ENCODE measurements at regions of chr4 and their contacts with region 1.

Region 1: DNA sequence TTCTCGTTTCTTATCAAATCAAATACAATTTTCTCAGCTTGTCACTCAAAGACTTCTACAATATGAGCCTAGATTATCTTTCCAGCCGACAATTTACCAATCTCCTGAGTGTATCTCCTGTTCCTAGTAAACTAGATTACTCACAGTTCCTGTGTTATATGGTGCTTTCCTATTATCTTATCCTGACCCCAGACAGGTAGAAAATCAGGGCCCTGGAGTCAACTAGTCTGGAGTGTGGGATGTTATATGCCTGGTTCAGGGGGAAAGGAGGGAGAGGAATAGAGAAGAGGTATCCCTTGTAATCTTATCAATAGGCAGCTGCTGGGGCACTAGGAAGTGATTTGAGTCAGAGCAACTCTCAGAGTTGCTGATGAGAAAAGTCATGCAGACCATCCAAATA is 127.1 kb downstream of the SLC7A11 start:
- DNase-seq: no peak
- ATAC-seq: no peak
- H3K4me3 ChIP-seq: no peak overlapping the region
- H3K27ac ChIP-seq: no peak overlapping the region
- H3K4me1 ChIP-seq: peaks cover 5% of the 10 kb centered on the region
- H3K27me3 ChIP-seq: no peaks in the 10 kb centered on the region
- CTCF ChIP-seq: no peak
- POLR2A ChIP-seq: no peak
- RAD21 ChIP-seq: no peak

Region 2: GRCh38 chr4:138158746-138159297 is 43.8 kb after region 1 on chr4:
- CTCF ChIA-PET with region 1: interaction called, 4 read pairs
- POLR2A ChIA-PET with region 1: no interaction called
- dilution Hi-C with region 1: no loop called
- in situ Hi-C with region 1: no loop called
- intact Hi-C with region 1: loop called (anchors 5 kb)
- DNase-seq: peak; percentile 91
- ATAC-seq: peak; percentile 87
- H3K4me3 ChIP-seq: no peak overlapping the region
- H3K27ac ChIP-seq: no peak overlapping the region
- H3K4me1 ChIP-seq: no peaks in the 10 kb centered on the region; the same call in 1 of the 2 replicates
- H3K27me3 ChIP-seq: no peaks in the 10 kb centered on the region
- CTCF ChIP-seq: no peak
- POLR2A ChIP-seq: no peak
- RAD21 ChIP-seq: no peak

Region 3: GRCh38 chr4:138320831-138321230 is 205.8 kb after region 1 on chr4:
- CTCF ChIA-PET with region 1: no interaction called
- POLR2A ChIA-PET with region 1: no interaction called
- dilution Hi-C with region 1: no loop called
- in situ Hi-C with region 1: no loop called
- intact Hi-C with region 1: no loop called
- DNase-seq: no peak
- ATAC-seq: no peak
- H3K4me3 ChIP-seq: no peak overlapping the region
- H3K27ac ChIP-seq: no peak overlapping the region
- H3K4me1 ChIP-seq: no peaks in the 10 kb centered on the region
- H3K27me3 ChIP-seq: no peaks in the 10 kb centered on the region
- CTCF ChIP-seq: no peak
- POLR2A ChIP-seq: no peak
- RAD21 ChIP-seq: no peak

Region 4: DNA sequence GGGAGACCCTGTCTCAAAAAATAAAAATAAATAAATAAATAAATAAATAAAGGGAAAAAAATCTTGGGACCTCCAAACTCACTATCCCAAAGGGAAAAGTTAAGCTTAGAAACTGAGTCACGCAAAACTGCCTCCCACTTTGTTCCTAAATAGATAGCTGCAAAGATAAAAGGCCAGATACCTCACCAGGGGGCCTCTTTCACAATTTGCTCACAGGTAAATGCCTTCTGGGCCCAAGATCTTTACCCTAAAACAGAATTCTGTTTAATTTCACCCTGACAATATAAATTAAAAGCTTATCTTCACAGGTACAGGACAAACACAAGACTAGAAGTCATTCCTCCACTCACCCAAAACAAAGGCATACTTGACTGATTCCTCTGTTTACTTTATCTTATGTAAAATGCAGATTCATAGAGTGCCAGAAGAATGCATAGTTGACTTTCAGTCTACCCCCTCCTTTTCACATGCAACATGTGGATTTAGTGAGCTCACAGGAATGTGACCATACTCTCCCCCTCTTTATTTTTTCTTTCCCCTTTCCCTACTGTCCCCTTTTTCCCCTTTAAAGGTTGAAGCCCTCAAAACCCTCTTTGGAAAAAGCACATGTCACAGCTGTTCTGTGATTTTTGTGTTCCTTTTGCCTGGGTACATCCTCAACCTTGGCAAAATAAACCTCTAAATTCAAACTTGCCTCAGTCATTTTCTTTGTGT is 1038.5 kb after region 1 on chr4:
- CTCF ChIA-PET with region 1: no interaction called
- POLR2A ChIA-PET with region 1: no interaction called
- dilution Hi-C with region 1: no loop called
- in situ Hi-C with region 1: no loop called
- intact Hi-C with region 1: no loop called
- DNase-seq: peak; percentile 57
- ATAC-seq: peak; percentile 75
- H3K4me3 ChIP-seq: no peak overlapping the region
- H3K27ac ChIP-seq: no peak overlapping the region
- H3K4me1 ChIP-seq: peaks cover 7% of the 10 kb centered on the region
- H3K27me3 ChIP-seq: no peaks in the 10 kb centered on the region
- CTCF ChIP-seq: no peak
- POLR2A ChIP-seq: no peak
- RAD21 ChIP-seq: no peak